Activated CD4-positive, alpha-beta T cell treated with anti-CD3 and anti-CD28 coated beads, Interleukin-2, amount 10 ng/mL, durations not matched to agents 7 days and 5 days (primary cell): ENCODE measurements at regions of chr1 and their contacts with region 1.

Region 1: DNA sequence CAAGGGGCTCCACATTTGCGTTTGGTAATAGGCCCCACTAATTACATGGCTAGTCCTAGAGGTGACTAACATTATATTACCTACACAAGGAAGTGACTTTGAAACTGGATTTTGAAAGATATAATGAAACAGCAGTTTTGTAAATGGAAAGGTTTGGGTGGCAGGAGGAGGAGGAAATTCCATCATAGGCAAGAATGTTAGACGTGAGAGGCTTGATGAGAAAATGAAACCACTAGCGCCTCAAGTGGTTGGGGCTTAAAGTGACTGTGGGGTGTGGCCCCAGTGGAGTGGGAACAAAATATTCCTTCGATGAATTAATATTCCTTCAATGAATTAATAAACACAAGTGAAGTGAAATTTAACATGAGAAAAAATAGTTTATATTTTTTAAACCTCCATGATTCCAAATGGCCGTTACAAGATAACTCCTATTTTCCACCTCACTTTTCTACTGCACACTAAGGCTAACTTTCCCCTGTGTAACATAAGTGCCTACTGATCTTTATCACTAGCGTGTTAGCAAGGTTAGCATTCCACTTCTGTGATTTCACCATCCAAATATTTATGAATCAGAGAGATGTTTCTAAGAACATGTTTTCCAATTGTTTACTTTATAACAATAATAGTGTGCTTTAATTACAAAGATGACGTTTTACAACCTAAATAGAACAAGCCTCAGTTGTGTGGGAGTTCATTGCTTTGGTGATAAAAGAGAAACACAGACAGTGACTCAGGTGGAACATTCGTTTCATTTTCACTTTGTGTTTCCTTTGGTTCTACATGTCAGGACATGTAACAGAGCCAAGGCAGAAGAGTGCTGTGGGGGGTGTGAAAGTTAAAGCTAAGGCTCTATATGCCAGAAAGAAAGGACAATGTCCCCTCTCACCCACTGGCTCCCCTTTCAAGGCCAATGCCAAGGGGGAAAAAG is 12.5 kb upstream of the ATF3 start:
- DNase-seq: peak; percentile 74
- H3K4me3 Mint-ChIP-seq: peak overlapping the region; percentile 66
- H3K27ac Mint-ChIP-seq: peak overlapping the region; percentile 93
- H3K4me1 Mint-ChIP-seq: peaks cover 30% of the 10 kb centered on the region
- H3K27me3 Mint-ChIP-seq: peaks cover 20% of the 10 kb centered on the region

Region 2: DNA sequence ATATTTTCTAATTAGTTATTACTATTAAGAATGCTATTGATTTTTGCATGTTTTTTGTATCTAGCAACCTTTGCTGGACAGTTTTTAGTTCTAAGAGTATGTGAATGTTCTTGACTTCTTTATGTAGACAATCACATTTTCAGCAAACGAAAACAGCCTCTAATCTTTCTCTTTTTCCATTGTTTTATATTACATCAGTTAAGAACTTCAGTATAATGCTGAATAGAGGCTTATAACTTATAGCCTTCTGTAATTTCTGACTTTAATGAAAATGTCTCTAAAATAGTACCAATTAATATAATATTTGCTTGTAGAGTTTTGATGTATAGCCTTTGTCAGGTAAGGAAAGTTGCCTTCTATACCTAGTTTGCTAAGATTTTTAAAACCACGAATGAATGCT is 20.7 kb before region 1 on chr1:
- CTCF ChIA-PET with region 1: no interaction called
- POLR2A ChIA-PET with region 1: no interaction called
- DNase-seq: no peak
- H3K4me3 Mint-ChIP-seq: no peak overlapping the region
- H3K27ac Mint-ChIP-seq: no peak overlapping the region
- H3K4me1 Mint-ChIP-seq: peaks cover 9% of the 10 kb centered on the region
- H3K27me3 Mint-ChIP-seq: peaks cover 36% of the 10 kb centered on the region

Region 3: GRCh38 chr1:212608209-212608955 is 12.3 kb after region 1 on chr1 and contains the start of gene ATF3:
- CTCF ChIA-PET with region 1: interaction called, 10 read pairs
- POLR2A ChIA-PET with region 1: no interaction called
- DNase-seq: peak; percentile 93
- H3K4me3 Mint-ChIP-seq: peak within 1 kb of the TSS; percentile 93
- H3K27ac Mint-ChIP-seq: peak within 1 kb of the TSS; percentile 98
- H3K4me1 Mint-ChIP-seq: peaks cover 58% of the 10 kb centered on the region
- H3K27me3 Mint-ChIP-seq: peaks cover 37% of the 10 kb centered on the region
- total RNA-seq, gene ATF3: 10.0 to 13.0 TPM